ENCODE measurements at regions of chr1 and their contacts with region 1.

Region 1: DNA sequence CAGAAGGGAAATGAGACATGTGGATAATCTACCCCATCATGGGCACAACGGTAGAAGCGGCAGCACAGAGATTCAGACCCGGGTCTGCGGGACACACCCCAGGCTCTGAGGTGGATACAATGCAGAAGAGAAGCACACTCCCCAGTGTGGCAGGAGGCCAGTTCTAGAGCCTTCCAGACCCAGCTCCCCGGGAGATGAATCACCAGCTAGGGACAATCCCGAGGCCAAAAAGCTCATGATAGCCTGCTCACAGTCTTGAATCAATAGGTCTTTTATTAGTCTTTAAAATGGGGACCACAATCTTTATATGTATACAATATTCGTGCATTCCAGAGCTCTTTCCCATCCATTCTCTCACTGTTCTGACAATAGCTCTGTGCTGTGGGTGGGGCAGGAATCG is 57.3 kb upstream of the DIRAS3 start:
- DNase-seq: no peak
- ATAC-seq: no peak
- H3K4me3 ChIP-seq: no peak overlapping the region
- H3K4me3 Mint-ChIP-seq: no peak overlapping the region
- H3K27ac ChIP-seq: no peak overlapping the region
- H3K27ac Mint-ChIP-seq: no peak overlapping the region
- H3K4me1 ChIP-seq: no peaks in the 10 kb centered on the region
- H3K4me1 Mint-ChIP-seq: no peaks in the 10 kb centered on the region
- H3K27me3 ChIP-seq: peaks cover 0 to 3% of the 10 kb centered on the region in 2 experiments
- H3K27me3 Mint-ChIP-seq: peaks cover 11% of the 10 kb centered on the region
- CTCF ChIP-seq: no peak

Region 2: GRCh38 chr1:68120136-68120791 is 12.5 kb after region 1 on chr1:
- CTCF ChIA-PET with region 1: interaction called, 20 read pairs
- POLR2A ChIA-PET with region 1: no interaction called
- intact Hi-C with region 1: no loop called
- DNase-seq: peak in 3 of 9 experiments; percentile 20 to 52 (median 37)
- ATAC-seq: no peak
- H3K4me3 ChIP-seq: no peak overlapping the region
- H3K4me3 Mint-ChIP-seq: no peak overlapping the region
- H3K27ac ChIP-seq: no peak overlapping the region
- H3K27ac Mint-ChIP-seq: no peak overlapping the region
- H3K4me1 ChIP-seq: no peaks in the 10 kb centered on the region
- H3K4me1 Mint-ChIP-seq: peaks cover 7% of the 10 kb centered on the region
- H3K27me3 ChIP-seq: no peaks in the 10 kb centered on the region
- H3K27me3 Mint-ChIP-seq: peaks cover 7% of the 10 kb centered on the region
- CTCF ChIP-seq: peak; percentile 48

Region 3: DNA sequence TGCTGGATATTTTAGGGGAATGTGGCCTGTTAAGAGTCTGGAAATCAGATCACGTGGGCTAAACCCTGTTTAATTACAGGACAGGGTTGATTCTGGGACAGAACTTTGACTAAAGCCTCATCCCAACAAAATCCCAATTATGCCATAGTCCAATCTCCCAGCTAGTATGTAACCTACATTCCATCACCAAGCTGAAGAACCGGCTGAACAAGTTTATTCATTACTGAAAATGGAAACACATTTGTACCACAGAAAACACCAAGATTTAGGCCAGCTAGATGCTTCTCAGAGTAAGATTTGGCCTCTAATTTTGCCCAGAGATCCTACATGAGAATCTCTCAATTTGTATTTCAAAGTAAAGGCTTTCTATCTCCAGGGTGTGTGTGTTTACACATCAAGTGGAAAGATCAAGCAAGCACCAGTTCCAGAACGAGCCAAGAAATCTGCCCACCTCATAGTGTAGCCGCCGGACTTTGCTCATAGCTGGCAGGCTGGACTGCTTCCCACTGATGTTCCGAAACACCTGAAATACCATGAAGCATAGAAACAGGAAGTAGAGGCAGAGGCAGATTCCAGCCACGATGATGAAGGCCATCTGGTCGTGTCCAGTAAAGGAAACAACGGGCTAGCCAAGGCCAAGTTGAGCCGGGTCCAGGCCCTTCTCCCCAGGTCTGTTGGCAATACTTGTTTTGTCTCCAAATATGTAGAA is 37.8 kb after region 1 on chr1:
- CTCF ChIA-PET with region 1: no interaction called
- POLR2A ChIA-PET with region 1: no interaction called
- intact Hi-C with region 1: no loop called
- DNase-seq: no peak
- ATAC-seq: no peak
- H3K4me3 ChIP-seq: no peak overlapping the region
- H3K4me3 Mint-ChIP-seq: no peak overlapping the region
- H3K27ac ChIP-seq: no peak overlapping the region
- H3K27ac Mint-ChIP-seq: no peak overlapping the region
- H3K4me1 ChIP-seq: no peaks in the 10 kb centered on the region
- H3K4me1 Mint-ChIP-seq: no peaks in the 10 kb centered on the region
- H3K27me3 ChIP-seq: no peaks in the 10 kb centered on the region
- H3K27me3 Mint-ChIP-seq: no peaks in the 10 kb centered on the region
- CTCF ChIP-seq: no peak

Region 4: DNA sequence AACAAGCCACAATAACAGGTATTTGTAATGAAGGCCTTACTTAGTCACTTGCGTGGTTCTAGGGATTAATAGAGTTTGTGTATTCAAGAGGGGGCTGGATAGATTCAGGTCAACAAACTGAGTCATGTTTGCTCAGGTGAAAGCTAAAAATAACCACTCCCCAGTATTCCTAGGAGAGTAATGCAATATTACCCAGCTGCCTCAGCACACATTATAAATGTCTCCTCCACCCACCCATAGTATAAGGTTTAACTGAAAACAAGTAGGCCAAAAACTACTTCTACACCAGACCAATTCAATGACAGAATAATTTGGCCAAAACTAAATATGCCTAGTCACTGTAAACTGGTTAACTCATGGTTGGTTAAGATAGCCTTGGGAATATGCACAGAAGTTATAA is 90.1 kb after region 1 on chr1:
- CTCF ChIA-PET with region 1: no interaction called
- POLR2A ChIA-PET with region 1: no interaction called
- intact Hi-C with region 1: no loop called
- DNase-seq: no peak
- ATAC-seq: no peak
- H3K4me3 ChIP-seq: no peak overlapping the region
- H3K4me3 Mint-ChIP-seq: no peak overlapping the region
- H3K27ac ChIP-seq: no peak overlapping the region
- H3K27ac Mint-ChIP-seq: no peak overlapping the region
- H3K4me1 ChIP-seq: no peaks in the 10 kb centered on the region
- H3K4me1 Mint-ChIP-seq: no peaks in the 10 kb centered on the region
- H3K27me3 ChIP-seq: no peaks in the 10 kb centered on the region
- H3K27me3 Mint-ChIP-seq: no peaks in the 10 kb centered on the region
- CTCF ChIP-seq: no peak